Posterior cingulate gyrus (tissue), 11 donors: ENCODE measurements at regions of chr11 and their contacts with region 1.

Region 1: DNA sequence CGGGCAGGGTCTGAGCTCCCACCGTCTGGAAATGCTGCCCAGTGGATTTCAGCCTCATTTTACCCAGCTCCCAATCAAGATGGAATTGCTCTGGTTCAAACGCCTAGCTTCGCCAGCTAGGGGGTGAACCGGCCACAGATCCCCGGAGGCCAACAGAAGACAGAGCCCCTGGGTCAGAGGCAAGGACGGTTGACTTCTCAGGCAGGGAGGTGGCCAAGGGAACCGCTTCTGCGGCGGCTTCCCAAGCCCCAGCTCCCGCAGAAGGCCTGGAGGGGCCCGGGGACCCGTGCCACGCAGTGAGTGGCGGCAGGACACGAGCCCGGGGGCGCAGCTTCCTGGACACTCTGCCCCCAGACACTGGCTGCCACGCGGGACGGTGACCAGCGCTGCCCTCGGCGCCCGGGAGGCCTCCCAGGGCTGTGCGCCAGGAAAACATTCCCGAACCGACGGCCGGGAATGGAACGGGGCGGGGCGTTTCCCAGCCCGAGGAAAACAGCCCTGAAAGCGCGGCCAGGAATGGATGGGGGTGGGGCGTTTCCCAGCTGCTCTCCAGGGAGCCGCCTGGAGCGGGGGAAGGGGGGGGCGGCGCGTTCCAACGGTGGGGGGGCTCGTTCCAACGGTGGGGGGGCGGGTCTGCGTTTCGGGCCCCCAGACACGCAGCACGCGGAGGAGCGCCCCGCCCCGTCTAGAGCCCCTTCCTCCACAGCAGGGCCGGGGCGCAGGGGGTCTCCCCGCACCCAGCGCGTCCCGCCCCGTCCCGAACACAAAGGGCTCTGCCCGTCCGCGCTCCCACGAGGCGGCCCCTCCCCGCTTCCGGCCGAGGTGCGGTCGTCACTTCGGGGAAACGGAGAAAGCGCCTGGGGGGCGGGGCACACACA is 13.5 kb upstream of the B4GALNT4 start:
- DNase-seq: peak in 7 of 10 donors; percentile 60 to 92 (median 76)

Region 2: GRCh38 chr11:225734-226453 is 129.9 kb before region 1 on chr11:
- intact Hi-C with region 1: no loop called
- DNase-seq: no peak

Region 3: GRCh38 chr11:250740-251299 is 105.0 kb before region 1 on chr11:
- intact Hi-C with region 1: loop called (anchors 10 kb)
- DNase-seq: peak in 7 of 10 donors; percentile 30 to 92 (median 66)

Region 4: GRCh38 chr11:304915-305843 is 50.6 kb before region 1 on chr11:
- intact Hi-C with region 1: loop called (anchors 10 kb)
- DNase-seq: peak in 5 of 10 donors; percentile 37 to 70 (median 47)

Region 5: GRCh38 chr11:382081-382629 is 26.3 kb after region 1 on chr11:
- intact Hi-C with region 1: no loop called
- DNase-seq: peak in 1 of 10 donors; percentile 80

Region 6: DNA sequence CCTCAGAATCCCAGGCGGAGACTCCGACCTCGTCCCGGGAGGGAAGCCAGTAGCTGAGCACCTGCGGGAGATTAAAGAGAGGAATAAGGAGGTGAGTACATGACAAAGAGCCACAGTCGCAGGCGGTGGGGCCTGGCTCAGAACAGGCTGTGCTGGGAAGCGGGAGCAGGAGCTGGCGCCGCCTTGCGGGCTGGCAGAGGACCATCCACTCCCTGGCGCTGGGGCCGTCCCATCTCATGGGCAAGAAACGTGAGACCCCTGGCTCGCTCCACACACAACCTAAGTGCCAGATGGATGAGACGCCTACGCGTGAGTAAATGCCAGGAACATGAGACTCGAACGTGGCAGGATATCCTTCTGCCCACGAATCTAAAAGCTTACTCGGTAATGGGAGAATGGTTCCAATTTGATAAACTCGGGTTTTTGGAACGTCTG is 427.8 kb after region 1 on chr11:
- intact Hi-C with region 1: no loop called
- DNase-seq: peak; percentile 75 to 98 (median 88)